IMR-90 (cell line): ENCODE measurements at regions of chr11 and their contacts with region 1.

Region 1: GRCh38 chr11:103927535-103927934 is 108.9 kb upstream of the DDI1 start:
- DNase-seq: peak; percentile 58
- ATAC-seq: peak; percentile 64
- H3K4me3 ChIP-seq: no peak overlapping the region
- H3K27ac ChIP-seq: no peak overlapping the region
- H3K4me1 ChIP-seq: peaks cover 7% of the 10 kb centered on the region
- H3K27me3 ChIP-seq: no peaks in the 10 kb centered on the region
- CTCF ChIP-seq: peak; percentile 62
- POLR2A ChIP-seq: no peak
- RAD21 ChIP-seq: peak; percentile 73

Region 2: GRCh38 chr11:103326070-103326794 is 601.3 kb before region 1 on chr11:
- CTCF ChIA-PET with region 1: no interaction called
- POLR2A ChIA-PET with region 1: no interaction called
- dilution Hi-C with region 1: no loop called
- in situ Hi-C with region 1: no loop called
- intact Hi-C with region 1: loop called (anchors 10 kb)
- DNase-seq: peak; percentile 78
- ATAC-seq: peak; percentile 98
- H3K4me3 ChIP-seq: no peak overlapping the region
- H3K27ac ChIP-seq: peak overlapping the region; percentile 34
- H3K4me1 ChIP-seq: peaks cover 4% of the 10 kb centered on the region
- H3K27me3 ChIP-seq: no peaks in the 10 kb centered on the region
- CTCF ChIP-seq: peak; percentile 91
- POLR2A ChIP-seq: no peak
- RAD21 ChIP-seq: peak; percentile 89

Region 3: DNA sequence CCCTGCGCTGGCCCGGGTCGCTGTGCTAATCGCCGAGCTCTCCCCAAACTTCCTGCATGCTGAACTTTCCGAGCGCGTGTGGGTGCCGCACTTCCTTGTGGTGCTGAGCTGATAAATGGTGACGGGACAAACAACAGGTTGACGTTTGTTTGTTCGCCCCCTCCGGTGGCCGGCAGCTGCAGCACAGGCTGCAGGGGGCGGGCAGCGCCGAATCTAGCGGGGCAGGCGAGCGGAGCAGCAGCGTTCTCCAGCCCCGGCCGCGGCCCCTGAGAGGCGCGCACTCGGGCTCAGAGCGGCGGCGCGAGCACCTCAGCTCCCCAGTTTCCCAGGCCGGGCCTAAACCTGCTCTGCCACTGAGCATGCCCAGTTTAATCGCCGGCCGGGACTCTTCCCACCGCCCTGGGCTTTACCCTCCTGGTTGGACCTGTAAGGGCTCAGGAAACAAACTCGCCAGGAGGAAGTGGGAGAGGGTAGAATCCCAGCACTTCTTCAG is 236.5 kb after region 1 on chr11 and contains the start of gene PDGFD:
- CTCF ChIA-PET with region 1: no interaction called
- POLR2A ChIA-PET with region 1: no interaction called
- dilution Hi-C with region 1: no loop called
- in situ Hi-C with region 1: no loop called
- intact Hi-C with region 1: loop called (anchors 5 kb)
- DNase-seq: peak; percentile 70
- ATAC-seq: peak; percentile 95
- H3K4me3 ChIP-seq: peak within 1 kb of the TSS; percentile 82
- H3K27ac ChIP-seq: peak within 1 kb of the TSS; percentile 23; the same call in 1 of the 2 replicates
- H3K4me1 ChIP-seq: peaks cover 3% of the 10 kb centered on the region
- H3K27me3 ChIP-seq: no peaks in the 10 kb centered on the region
- CTCF ChIP-seq: peak; percentile 43
- POLR2A ChIP-seq: no peak
- RAD21 ChIP-seq: peak; percentile 29; the same call in 1 of the 2 replicates
- total RNA-seq, gene PDGFD: 3.0 and 3.1 TPM in 2 replicates

Region 4: GRCh38 chr11:104246590-104246989 is 319.1 kb after region 1 on chr11:
- CTCF ChIA-PET with region 1: no interaction called
- POLR2A ChIA-PET with region 1: no interaction called
- dilution Hi-C with region 1: no loop called
- in situ Hi-C with region 1: no loop called
- intact Hi-C with region 1: loop called (anchors 10 kb)
- DNase-seq: no peak
- ATAC-seq: no peak
- H3K4me3 ChIP-seq: no peak overlapping the region
- H3K27ac ChIP-seq: no peak overlapping the region
- H3K4me1 ChIP-seq: no peaks in the 10 kb centered on the region
- H3K27me3 ChIP-seq: no peaks in the 10 kb centered on the region
- CTCF ChIP-seq: no peak
- POLR2A ChIP-seq: no peak
- RAD21 ChIP-seq: no peak

Region 5: GRCh38 chr11:104609311-104610085 is 682.0 kb after region 1 on chr11:
- CTCF ChIA-PET with region 1: no interaction called
- POLR2A ChIA-PET with region 1: no interaction called
- dilution Hi-C with region 1: no loop called
- in situ Hi-C with region 1: no loop called
- intact Hi-C with region 1: loop called (anchors 10 kb)
- DNase-seq: peak; percentile 75
- ATAC-seq: peak; percentile 94
- H3K4me3 ChIP-seq: no peak overlapping the region
- H3K27ac ChIP-seq: no peak overlapping the region
- H3K4me1 ChIP-seq: no peaks in the 10 kb centered on the region
- H3K27me3 ChIP-seq: no peaks in the 10 kb centered on the region
- CTCF ChIP-seq: peak; percentile 70
- POLR2A ChIP-seq: no peak
- RAD21 ChIP-seq: peak; percentile 78